ENCODE measurements at regions of chr2 and their contacts with region 1.

Region 1: DNA sequence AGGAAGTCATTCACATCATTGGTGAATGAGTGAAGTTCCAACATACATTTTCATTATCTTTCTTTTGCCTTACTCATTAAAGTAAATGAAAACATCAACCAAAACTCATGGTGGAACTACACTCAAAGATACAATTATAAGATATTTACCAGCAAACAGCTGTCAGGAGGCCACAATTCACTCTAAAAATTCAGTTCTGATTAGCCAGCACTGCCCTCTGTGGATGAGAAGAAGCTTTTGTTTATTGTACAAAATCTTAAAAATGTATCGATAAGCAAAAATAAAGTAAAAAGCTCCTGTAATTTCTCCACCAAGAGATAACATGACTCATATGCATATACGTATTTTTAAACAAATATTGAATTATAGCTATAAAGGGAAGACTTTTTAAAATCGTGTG is 73.5 kb upstream of the RAPGEF4 start:
- DNase-seq: no peak
- H3K4me3 Mint-ChIP-seq: no peak overlapping the region
- H3K27ac Mint-ChIP-seq: no peak overlapping the region
- H3K4me1 Mint-ChIP-seq: no peaks in the 10 kb centered on the region
- H3K27me3 Mint-ChIP-seq: no peaks in the 10 kb centered on the region

Region 2: DNA sequence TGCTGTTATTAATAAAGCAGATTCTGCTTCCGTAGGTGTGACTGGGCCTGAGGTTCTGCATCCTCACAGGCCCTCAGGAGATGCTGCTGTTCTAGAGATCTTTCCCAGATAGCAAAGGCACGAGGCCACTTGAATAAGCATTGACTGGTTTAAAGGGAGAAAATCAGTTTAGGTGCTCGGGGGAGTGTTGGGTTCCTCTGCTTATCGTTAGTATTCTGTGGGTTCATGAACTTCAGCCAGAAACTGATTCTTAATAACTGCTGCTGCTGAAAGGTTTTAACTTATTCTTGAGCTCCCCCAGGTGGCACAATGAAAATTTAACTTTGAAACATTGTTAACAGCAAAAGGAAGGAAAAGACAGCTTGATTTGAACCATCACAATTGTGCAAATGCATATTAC is 177.8 kb before region 1 on chr2:
- CTCF ChIA-PET with region 1: no interaction called
- POLR2A ChIA-PET with region 1: no interaction called
- DNase-seq: peak; percentile 35
- H3K4me3 Mint-ChIP-seq: no peak overlapping the region
- H3K27ac Mint-ChIP-seq: no peak overlapping the region
- H3K4me1 Mint-ChIP-seq: peaks cover 33% of the 10 kb centered on the region
- H3K27me3 Mint-ChIP-seq: no peaks in the 10 kb centered on the region

Region 3: DNA sequence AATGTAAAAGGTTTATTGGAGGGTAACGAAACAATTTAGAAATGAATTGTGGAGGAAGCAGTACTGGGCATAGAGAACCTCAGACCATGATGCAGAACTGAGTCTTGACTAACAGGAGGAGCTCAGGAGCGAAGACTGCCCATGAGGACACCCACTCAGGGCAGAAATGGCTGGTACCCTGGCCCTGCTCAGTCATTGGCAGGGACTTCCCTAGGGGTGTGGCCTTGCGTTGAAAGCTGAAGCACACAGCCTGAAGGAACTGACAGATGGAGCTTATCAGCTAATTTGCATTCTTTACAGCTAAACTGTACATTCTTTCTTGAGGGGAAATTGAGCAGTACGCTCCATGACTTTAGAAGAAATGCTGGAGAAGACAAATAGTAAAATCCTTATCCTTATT is 49.1 kb before region 1 on chr2:
- CTCF ChIA-PET with region 1: no interaction called
- POLR2A ChIA-PET with region 1: no interaction called
- DNase-seq: no peak
- H3K4me3 Mint-ChIP-seq: no peak overlapping the region
- H3K27ac Mint-ChIP-seq: no peak overlapping the region
- H3K4me1 Mint-ChIP-seq: no peaks in the 10 kb centered on the region
- H3K27me3 Mint-ChIP-seq: no peaks in the 10 kb centered on the region

Region 4: GRCh38 chr2:172674034-172674967 is 12.2 kb after region 1 on chr2:
- CTCF ChIA-PET with region 1: interaction called, 10 read pairs
- POLR2A ChIA-PET with region 1: no interaction called
- DNase-seq: peak; percentile 25
- H3K4me3 Mint-ChIP-seq: no peak overlapping the region
- H3K27ac Mint-ChIP-seq: no peak overlapping the region
- H3K4me1 Mint-ChIP-seq: peaks cover 3% of the 10 kb centered on the region
- H3K27me3 Mint-ChIP-seq: peaks cover 2% of the 10 kb centered on the region

Region 5: DNA sequence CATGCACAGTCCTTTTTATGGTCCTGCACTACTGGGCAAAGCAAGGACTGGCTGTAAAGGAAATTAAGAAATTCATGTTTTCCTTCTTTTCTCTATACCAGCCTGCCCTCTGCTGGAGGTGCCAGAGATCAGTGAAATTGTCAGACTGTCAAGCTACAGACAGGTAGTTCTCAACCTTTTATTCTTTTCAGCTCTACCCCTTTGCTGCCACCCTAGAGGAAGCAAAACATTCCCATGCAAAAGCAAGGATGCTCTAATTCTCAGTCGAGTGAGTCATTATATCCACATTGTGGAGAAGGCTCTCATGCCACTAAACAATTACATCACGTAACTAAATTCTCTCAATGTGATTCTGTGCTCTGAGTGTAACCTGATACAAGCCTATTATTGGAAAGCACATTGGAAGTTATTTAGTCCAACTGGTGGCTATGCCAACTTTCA is 48.5 kb after region 1 on chr2:
- CTCF ChIA-PET with region 1: no interaction called
- POLR2A ChIA-PET with region 1: no interaction called
- DNase-seq: peak; percentile 54
- H3K4me3 Mint-ChIP-seq: no peak overlapping the region
- H3K27ac Mint-ChIP-seq: no peak overlapping the region
- H3K4me1 Mint-ChIP-seq: no peaks in the 10 kb centered on the region
- H3K27me3 Mint-ChIP-seq: peaks cover 13% of the 10 kb centered on the region